H1 (cell line): ENCODE measurements at regions of chr3 and their contacts with region 1.

Region 1: DNA sequence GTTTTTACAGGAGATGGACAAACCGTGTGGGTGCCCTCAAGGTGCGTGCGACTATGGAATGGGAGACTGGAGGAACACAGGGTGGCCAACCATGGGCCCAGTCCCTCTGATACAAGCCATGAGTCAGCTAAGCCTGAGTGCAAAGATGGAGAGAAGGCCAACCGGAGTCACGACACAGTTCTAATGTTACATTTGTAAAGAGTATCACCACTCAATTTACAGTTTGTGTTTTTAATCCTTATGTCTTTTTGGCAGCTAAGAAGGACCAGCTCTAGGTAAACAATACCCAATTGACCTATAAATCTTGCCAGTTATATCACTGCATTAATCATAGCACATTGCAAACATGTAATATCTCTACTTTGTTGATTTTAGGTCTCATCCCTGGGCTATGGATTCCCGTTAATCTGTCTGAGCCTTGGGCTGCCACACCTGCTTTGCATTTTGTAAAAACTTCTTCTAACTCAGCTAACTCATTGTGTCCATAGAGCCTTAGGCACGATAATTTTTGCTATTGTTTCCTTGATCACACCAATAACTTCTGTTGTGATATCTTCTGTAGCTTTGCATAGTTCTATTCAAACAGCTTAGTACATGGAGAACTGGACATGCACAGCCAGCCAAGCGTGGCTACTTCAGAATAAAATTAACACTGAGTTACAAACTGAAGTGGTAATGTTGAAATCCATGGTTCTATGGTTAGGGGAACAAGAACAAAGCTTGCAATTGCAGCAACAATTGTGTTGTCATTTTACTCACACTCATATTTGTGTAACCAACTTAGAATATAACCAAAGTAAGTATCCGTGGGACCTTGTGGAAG is 50.2 kb downstream of the LSM3 start:
- DNase-seq: no peak
- H3K4me3 ChIP-seq: no peak overlapping the region
- H3K27ac ChIP-seq: no peak overlapping the region
- H3K4me1 ChIP-seq: peaks cover 0 to 5% (median 0%) of the 10 kb centered on the region in 4 experiments; a peak in 1 of 7 replicates
- H3K27me3 ChIP-seq: no peaks in the 10 kb centered on the region
- CTCF ChIP-seq: no peak
- EP300 ChIP-seq: no peak
- POLR2A ChIP-seq: no peak
- RAD21 ChIP-seq: no peak

Region 2: DNA sequence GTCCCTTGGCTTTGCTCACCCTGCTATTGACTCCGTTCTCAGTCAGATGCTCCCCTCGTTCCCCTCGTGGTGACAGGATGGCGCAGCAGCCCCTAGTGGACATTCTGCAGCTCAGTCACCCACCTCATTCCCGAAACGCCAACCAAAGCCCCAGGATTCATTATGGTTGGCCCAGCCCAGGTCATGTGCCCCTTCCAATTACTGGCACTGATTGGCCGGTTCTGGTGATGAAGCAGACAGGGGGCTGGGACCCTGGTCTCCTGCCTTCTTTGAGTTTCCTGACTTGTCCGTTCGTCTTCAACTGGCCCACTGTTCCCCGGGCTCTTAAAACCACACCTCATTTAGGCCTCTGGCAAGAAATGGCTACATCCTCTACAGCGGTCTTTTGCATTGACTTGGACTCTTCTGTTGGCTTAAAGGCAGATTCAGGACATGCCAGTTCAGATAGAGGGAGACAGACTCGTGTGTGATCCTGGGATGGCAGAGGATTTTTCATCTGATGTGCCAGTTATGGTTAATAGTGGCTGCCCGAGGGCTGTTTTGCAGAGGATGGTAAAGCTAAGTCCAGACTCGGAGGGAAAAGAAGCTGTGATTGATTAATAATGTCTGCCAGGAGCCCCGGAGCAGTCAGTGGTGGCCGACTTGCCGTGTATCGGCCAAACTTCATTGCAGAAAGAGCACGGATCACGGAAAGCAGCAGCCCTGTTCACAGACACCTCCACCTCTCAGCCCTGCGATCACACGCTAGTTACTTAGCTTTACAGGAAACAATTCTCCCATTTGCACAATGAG is 12.4 kb before region 1 on chr3:
- CTCF ChIA-PET with region 1: interaction called, 22 read pairs
- POLR2A ChIA-PET with region 1: interaction called, 5 read pairs
- DNase-seq: peak; percentile 64 to 86
- H3K4me3 ChIP-seq: peak overlapping the region; percentile 25 to 57 (median 42); a peak in 7 of 8 replicates
- H3K27ac ChIP-seq: peak overlapping the region; percentile 4; the same call in 1 of the 2 replicates
- H3K4me1 ChIP-seq: peaks cover 0 to 2% (median 0%) of the 10 kb centered on the region in 4 experiments; a peak in 3 of 7 replicates
- H3K27me3 ChIP-seq: no peaks in the 10 kb centered on the region
- CTCF ChIP-seq: peak; percentile 88 to 98 (median 95)
- EP300 ChIP-seq: 0 out of 3 replicates have a peak, but pooled peaks of 1 of the 2 experiments have one; percentile 17
- POLR2A ChIP-seq: peak in 1 of 2 experiments; percentile 49; a peak in 2 of 3 replicates
- RAD21 ChIP-seq: peak; percentile 58 to 66

Region 3: DNA sequence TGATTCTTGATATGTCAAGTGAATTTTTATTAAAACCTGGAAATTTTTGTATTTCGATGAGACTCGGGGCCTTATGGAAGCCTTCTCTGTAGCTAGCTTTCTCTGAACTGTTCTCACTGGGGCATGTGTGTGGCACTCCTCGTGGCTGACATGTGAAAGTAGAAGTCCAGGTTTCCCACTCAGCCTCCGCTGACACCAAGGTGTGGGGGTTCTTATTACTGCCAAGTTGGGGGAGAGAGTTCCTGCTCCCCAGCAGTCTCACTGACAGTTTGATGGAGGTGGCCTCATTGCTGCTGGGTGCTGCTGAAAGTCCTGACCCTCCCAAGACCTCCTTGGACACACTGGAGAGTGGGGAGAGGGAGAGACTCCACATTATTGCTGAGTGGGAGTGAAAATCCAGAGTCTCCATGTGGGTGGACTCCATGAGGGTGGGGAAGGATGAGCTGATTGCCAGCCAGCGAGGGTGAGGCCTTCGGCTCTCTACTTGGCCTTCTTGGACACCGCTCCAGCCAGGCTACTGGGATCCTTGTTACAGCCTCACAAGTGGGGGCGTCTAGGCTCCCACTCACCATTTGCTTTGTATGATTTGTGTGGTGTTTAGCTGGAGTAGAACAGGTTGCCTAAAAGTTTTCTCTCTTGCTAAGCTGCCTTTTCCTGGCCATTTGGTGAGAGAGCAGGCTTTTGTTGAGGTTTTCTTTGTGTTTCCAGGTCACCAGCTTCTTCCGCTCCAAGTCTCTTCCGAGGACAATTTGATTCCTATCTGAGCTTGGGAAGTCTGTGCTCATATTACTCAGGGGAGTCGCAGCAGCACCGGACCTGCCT is 13.8 kb after region 1 on chr3:
- CTCF ChIA-PET with region 1: interaction called, 12 read pairs
- POLR2A ChIA-PET with region 1: interaction called, 3 read pairs
- DNase-seq: no peak
- H3K4me3 ChIP-seq: no peak overlapping the region
- H3K27ac ChIP-seq: no peak overlapping the region
- H3K4me1 ChIP-seq: no peaks in the 10 kb centered on the region
- H3K27me3 ChIP-seq: no peaks in the 10 kb centered on the region
- CTCF ChIP-seq: no peak
- EP300 ChIP-seq: no peak
- POLR2A ChIP-seq: no peak
- RAD21 ChIP-seq: no peak

Region 4: DNA sequence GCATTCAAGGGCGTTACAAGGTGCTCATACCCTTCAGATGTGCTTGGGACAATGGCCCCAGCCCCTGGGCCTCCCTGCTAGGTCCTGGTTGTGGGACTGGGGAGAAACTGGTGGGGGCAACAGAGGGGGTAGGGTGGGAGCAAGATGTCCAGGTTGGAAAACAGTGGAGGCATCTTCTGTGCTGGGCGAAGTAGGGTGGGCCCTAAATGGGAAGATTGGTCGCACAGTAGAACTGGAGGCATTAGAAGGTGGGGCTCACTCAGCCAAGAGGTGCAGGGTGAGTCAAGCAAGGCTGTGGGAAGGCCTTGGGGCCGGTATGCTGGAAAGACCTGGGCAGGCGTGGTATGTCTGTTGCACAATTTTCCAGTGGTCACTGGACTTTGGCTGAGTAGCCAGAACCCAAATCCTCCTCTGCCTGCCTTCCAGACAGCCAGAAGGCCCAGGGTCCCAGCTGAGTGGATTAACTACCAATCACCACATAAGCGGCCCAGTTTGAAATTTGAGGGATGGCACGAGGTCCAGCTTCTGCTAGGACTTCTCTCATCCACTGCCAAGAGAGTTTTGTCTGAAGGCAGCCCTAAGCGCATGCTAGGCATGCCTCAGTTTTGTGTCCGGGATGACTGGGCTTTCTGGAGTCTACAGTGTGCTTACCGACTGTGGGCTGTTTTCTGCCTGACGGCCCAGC is 24.3 kb after region 1 on chr3:
- CTCF ChIA-PET with region 1: interaction called, 12 read pairs
- POLR2A ChIA-PET with region 1: no interaction called
- DNase-seq: no peak
- H3K4me3 ChIP-seq: no peak overlapping the region
- H3K27ac ChIP-seq: no peak overlapping the region
- H3K4me1 ChIP-seq: peaks cover 0 to 7% (median 0%) of the 10 kb centered on the region in 4 experiments; a peak in 1 of 7 replicates
- H3K27me3 ChIP-seq: peaks cover 0 to 4% (median 1%) of the 10 kb centered on the region in 4 experiments; a peak in 2 of 7 replicates
- CTCF ChIP-seq: no peak
- EP300 ChIP-seq: no peak
- POLR2A ChIP-seq: no peak
- RAD21 ChIP-seq: no peak

Region 5: GRCh38 chr3:14305324-14305723 is 76.5 kb after region 1 on chr3:
- CTCF ChIA-PET with region 1: no interaction called
- POLR2A ChIA-PET with region 1: no interaction called
- DNase-seq: no peak
- H3K4me3 ChIP-seq: no peak overlapping the region
- H3K27ac ChIP-seq: no peak overlapping the region
- H3K4me1 ChIP-seq: peaks cover 0 to 3% (median 0%) of the 10 kb centered on the region in 4 experiments; a peak in 1 of 7 replicates
- H3K27me3 ChIP-seq: peaks cover 0 to 2% (median 0%) of the 10 kb centered on the region in 4 experiments; a peak in 1 of 7 replicates
- CTCF ChIP-seq: no peak
- EP300 ChIP-seq: no peak
- POLR2A ChIP-seq: no peak
- RAD21 ChIP-seq: no peak